ENCODE measurements at regions of chr2 and their contacts with region 1.

Region 1: DNA sequence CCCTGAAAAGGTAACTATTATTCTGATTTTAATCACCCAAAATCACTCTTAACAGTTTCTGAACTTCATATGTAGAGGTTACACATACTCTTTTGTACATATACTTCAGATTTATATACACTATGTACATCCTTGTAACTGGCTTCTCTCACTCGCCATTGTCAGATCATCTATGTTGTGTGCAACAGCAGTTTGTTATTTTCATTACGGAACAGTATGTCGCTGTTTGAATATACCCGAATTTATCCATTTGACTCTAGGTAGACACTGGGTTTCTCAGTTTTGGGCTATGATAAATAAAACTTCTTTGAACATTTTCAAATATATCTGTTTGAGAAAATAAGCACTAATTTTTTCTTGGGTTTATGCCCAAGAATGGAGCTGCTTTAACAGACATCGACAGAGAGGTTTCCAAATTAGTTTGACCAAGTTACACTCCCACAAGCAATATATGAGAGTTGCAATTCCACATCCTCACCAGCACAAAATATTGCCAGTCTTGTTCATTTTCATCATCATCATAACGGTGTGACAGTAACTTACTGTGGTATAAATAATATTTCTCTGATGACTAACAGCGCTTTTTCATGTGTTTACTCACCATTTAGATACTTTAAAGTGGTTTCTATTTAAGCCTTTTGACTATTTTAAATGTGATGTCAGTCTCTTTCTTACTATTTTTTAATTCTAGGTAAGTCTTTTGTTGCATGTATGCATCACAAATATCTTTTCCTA is 80.9 kb downstream of the SMC6 start:
- DNase-seq: no peak

Region 2: DNA sequence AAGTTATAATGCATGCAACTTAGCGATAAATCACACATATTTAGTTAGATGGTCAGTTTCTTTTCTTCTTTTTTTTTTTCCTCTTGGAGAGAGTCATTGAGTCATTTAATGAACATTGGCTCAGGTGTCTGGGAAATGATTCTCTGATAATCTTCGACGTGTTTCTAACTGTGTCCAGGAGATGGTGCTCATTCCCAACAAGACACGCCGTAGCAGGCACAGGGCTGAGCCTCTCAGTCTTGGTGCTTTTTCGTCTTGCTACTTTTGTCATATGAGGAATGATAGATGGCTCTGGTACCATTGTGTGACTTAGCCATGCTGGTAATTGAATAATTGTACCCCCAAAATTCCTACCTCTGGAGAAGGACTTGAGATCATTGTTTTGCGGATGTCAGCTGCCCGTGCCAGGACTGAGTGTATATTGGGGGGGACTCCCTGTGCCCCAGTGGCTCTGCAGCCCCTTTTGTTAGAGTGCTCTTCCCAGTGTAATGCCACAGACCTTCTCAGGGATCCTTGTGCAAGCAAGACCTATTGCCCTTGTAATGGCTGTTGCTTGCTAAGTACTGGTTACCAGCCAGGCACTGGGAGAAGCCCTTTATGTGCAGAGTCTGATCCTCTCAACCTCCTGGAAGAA is 899.6 kb before region 1 on chr2:
- intact Hi-C with region 1: loop called (anchors 5 kb)
- DNase-seq: no peak

Region 3: GRCh38 chr2:17470855-17471641 is 201.7 kb before region 1 on chr2:
- intact Hi-C with region 1: loop called (anchors 2 kb)
- DNase-seq: no peak

Measured in cardiac septum (tissue), 1 donor.